Activated naive CD8-positive, alpha-beta T cell treated with anti-CD3 and anti-CD28 coated beads, Interleukin-2, amount 10 ng/mL, durations not matched to agents 7 days and 5 days (primary cell): ENCODE measurements at regions of chr11 and their contacts with region 1.

Region 1: DNA sequence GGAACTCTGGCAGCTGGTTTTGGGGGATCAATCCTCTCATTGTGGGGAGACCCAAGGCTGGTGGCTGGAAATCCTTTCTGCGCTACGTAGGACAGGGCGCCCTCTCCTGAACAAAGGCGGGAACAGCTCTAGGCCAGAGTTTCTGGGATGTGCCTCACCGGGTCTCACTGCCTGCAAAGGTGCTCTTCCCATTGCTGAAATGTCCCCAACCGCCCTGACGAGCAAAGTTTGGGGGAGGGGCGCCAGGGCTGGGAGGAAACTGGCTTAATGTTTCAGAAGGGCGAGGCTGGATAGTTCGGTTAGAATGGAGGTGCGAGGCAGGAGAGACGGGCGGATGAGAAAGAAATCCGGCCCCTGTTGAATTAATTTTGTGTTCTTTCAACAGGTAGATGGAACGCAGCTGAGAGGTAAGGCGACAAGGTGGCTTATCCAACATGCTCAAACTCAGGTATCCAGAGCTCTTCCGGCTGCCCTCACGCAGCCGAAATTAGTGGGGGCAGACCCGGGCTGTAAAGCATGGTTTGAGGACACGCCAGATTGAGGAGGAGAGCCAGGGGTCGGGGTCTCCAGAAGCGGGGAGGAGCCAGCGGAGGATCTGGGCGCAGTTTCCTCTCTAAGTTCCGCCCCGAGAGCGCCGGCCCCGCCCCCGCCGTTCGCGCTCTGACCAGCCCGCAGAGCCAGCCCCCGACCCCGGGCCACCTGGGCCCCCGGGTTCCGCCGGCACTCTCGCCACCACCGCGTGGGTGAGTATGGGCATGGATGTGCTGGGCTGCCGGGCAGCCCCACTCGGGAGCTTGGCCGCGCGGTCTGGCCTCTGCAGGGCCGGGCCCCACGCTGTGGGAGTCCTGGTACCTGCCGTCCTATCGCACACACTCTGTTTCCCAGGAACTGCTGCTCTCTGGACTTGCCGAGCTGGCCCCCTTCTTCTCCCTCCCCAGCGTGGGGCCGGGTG is at the start of gene PGAP2:
- DNase-seq: peak; percentile 79
- ATAC-seq: peak; percentile 72
- H3K4me3 Mint-ChIP-seq: peak within 1 kb of the TSS; percentile 83
- H3K27ac Mint-ChIP-seq: peak within 1 kb of the TSS; percentile 83
- H3K4me1 Mint-ChIP-seq: peaks cover 17% of the 10 kb centered on the region
- H3K27me3 Mint-ChIP-seq: no peaks in the 10 kb centered on the region
- total RNA-seq, gene PGAP2: 21.8 to 22.7 TPM

Region 2: DNA sequence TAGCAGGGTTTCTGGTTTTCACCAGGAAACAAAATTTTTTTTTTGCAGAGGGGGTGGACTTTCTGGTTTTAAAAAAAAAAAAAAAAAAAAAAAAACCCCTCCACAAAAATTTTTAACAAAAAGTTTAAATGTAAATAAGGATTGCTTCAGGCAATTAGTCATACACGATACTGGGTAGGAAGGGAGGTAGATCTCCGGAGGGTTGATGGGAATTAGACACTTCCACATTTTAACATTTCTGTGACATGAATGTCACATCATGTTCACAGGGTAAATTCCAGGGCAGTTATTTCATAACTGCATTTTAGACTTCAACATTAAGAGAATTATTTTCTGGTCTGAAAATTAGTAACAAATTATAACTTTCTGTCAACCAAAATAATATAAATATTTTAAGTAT is 26.8 kb before region 1 on chr11:
- POLR2A ChIA-PET with region 1: interaction called, 15 read pairs
- DNase-seq: no peak
- ATAC-seq: no peak
- H3K4me3 Mint-ChIP-seq: peak overlapping the region; percentile 19
- H3K27ac Mint-ChIP-seq: peak overlapping the region; percentile 54
- H3K4me1 Mint-ChIP-seq: peaks cover 40% of the 10 kb centered on the region
- H3K27me3 Mint-ChIP-seq: no peaks in the 10 kb centered on the region

Region 3: GRCh38 chr11:3797329-3798095 is 10.7 kb before region 1 on chr11 and contains the start of gene NUP98:
- POLR2A ChIA-PET with region 1: interaction called, 11 read pairs
- DNase-seq: peak; percentile 99
- ATAC-seq: peak; percentile 97
- H3K4me3 Mint-ChIP-seq: peak within 1 kb of the TSS; percentile 93
- H3K27ac Mint-ChIP-seq: peak within 1 kb of the TSS; percentile 94
- H3K4me1 Mint-ChIP-seq: peaks cover 35% of the 10 kb centered on the region
- H3K27me3 Mint-ChIP-seq: no peaks in the 10 kb centered on the region
- total RNA-seq, gene NUP98: 91.4 to 96.7 TPM